ENCODE measurements at regions of chr10 and their contacts with region 1.

Region 1: GRCh38 chr10:54710918-54711317 is 90.1 kb downstream of the PCDH15 start:
- H3K4me3 Mint-ChIP-seq: no peak overlapping the region
- H3K27ac Mint-ChIP-seq: no peak overlapping the region
- H3K4me1 Mint-ChIP-seq: no peaks in the 10 kb centered on the region
- H3K27me3 Mint-ChIP-seq: no peaks in the 10 kb centered on the region

Region 2: GRCh38 chr10:54691331-54691730 is 19.6 kb before region 1 on chr10:
- intact Hi-C with region 1: loop called (anchors 1 kb)
- H3K4me3 Mint-ChIP-seq: no peak overlapping the region
- H3K27ac Mint-ChIP-seq: no peak overlapping the region
- H3K4me1 Mint-ChIP-seq: no peaks in the 10 kb centered on the region
- H3K27me3 Mint-ChIP-seq: no peaks in the 10 kb centered on the region

Measured in dendritic cell treated with granulocyte-macrophage colony-stimulating factor and Interleukin-4, amounts not matched to agents 40 ng/mL and 50 ng/mL, for 4 days (primary cell).